ENCODE measurements at regions of chr12 and their contacts with region 1.

Region 1: GRCh38 chr12:56189176-56189917 is at the start of gene SMARCC2:
- DNase-seq: peak; percentile 91 to 92
- ATAC-seq: peak; percentile 83 to 91
- H3K4me3 ChIP-seq: peak within 1 kb of the TSS; percentile 81
- H3K27ac ChIP-seq: peak within 1 kb of the TSS; percentile 93 to 99
- H3K4me1 ChIP-seq: peaks cover 13% of the 10 kb centered on the region
- CTCF ChIP-seq: peak; percentile 99
- EP300 ChIP-seq: no peak
- POLR2A ChIP-seq: peak; percentile 63
- RAD21 ChIP-seq: peak; percentile 39 to 41; a peak in 3 of 5 replicates
- polyA plus RNA-seq, gene SMARCC2: 83.9 and 109 TPM in 2 replicates

Region 2: GRCh38 chr12:55619354-55620138 is 569.8 kb before region 1 on chr12:
- CTCF ChIA-PET with region 1: no interaction called
- POLR2A ChIA-PET with region 1: no interaction called
- DNase-seq: peak; percentile 91 to 94
- ATAC-seq: peak; percentile 89 to 98
- H3K4me3 ChIP-seq: no peak overlapping the region
- H3K27ac ChIP-seq: peak overlapping the region in 1 of 2 experiments; percentile 38; a peak in 2 of 6 replicates
- H3K4me1 ChIP-seq: peaks cover 5% of the 10 kb centered on the region
- CTCF ChIP-seq: peak; percentile 98
- EP300 ChIP-seq: no peak
- POLR2A ChIP-seq: no peak
- RAD21 ChIP-seq: peak; percentile 91 to 92

Region 3: GRCh38 chr12:56127888-56128669 is 61.3 kb before region 1 on chr12 and contains the start of gene ESYT1:
- CTCF ChIA-PET with region 1: interaction called, 204 read pairs
- POLR2A ChIA-PET with region 1: interaction called, 21 read pairs
- DNase-seq: peak; percentile 99 to 100
- ATAC-seq: peak; percentile 83 to 95
- H3K4me3 ChIP-seq: peak within 1 kb of the TSS; percentile 76
- H3K27ac ChIP-seq: peak within 1 kb of the TSS; percentile 87 to 89
- H3K4me1 ChIP-seq: peaks cover 25% of the 10 kb centered on the region
- CTCF ChIP-seq: no peak
- EP300 ChIP-seq: no peak
- POLR2A ChIP-seq: peak; percentile 69
- RAD21 ChIP-seq: no peak
- polyA plus RNA-seq, gene ESYT1: 72.4 and 91.6 TPM in 2 replicates

Region 4: DNA sequence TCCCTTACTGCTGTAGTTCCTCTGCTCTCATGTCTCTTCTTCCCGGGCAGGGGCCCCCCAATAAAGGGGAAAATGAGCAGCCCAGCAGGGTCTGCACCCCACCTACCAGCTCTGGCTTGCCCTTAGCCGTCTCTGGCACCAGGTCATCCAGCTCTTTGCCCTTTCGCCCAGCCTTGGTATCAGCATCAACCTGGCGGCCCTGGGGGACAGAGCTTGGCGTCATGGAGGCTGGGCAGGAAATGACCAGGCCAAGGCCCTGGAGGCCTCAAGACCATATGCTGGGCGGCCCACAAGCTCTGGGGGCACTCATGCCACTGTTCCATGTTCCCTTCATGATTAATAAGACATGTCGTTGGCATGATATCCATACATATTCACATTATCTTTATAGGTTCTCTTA is 16.5 kb before region 1 on chr12:
- CTCF ChIA-PET with region 1: interaction called, 42 read pairs
- POLR2A ChIA-PET with region 1: interaction called, 3 read pairs
- DNase-seq: no peak
- ATAC-seq: no peak
- H3K4me3 ChIP-seq: no peak overlapping the region
- H3K27ac ChIP-seq: no peak overlapping the region
- H3K4me1 ChIP-seq: no peaks in the 10 kb centered on the region
- CTCF ChIP-seq: no peak
- EP300 ChIP-seq: no peak
- POLR2A ChIP-seq: no peak
- RAD21 ChIP-seq: no peak

Region 5: GRCh38 chr12:56224102-56224701 is 34.9 kb after region 1 on chr12 and contains the start of gene NABP2:
- CTCF ChIA-PET with region 1: interaction called, 56 read pairs
- POLR2A ChIA-PET with region 1: interaction called, 19 read pairs
- DNase-seq: peak; percentile 99
- ATAC-seq: peak; percentile 84 to 89
- H3K4me3 ChIP-seq: peak within 1 kb of the TSS; percentile 66
- H3K27ac ChIP-seq: peak within 1 kb of the TSS; percentile 80 to 94
- H3K4me1 ChIP-seq: peaks cover 26% of the 10 kb centered on the region
- CTCF ChIP-seq: peak; percentile 95
- EP300 ChIP-seq: no peak
- POLR2A ChIP-seq: peak; percentile 61
- RAD21 ChIP-seq: peak; percentile 57 to 73
- polyA plus RNA-seq, gene NABP2: 86.1 and 86.7 TPM in 2 replicates

Region 6: GRCh38 chr12:56258057-56258819 is 68.9 kb after region 1 on chr12 and contains the start of gene ANKRD52:
- CTCF ChIA-PET with region 1: interaction called, 37 read pairs
- POLR2A ChIA-PET with region 1: interaction called, 3 read pairs
- DNase-seq: peak; percentile 80 to 88
- ATAC-seq: peak; percentile 86 to 89
- H3K4me3 ChIP-seq: peak within 1 kb of the TSS; percentile 94
- H3K27ac ChIP-seq: peak within 1 kb of the TSS; percentile 92 to 97
- H3K4me1 ChIP-seq: peaks cover 47% of the 10 kb centered on the region
- CTCF ChIP-seq: peak; percentile 87
- EP300 ChIP-seq: no peak
- POLR2A ChIP-seq: peak; percentile 65
- RAD21 ChIP-seq: 0 out of 5 replicates have a peak, but pooled peaks of 1 of the 2 experiments have one; percentile 39
- polyA plus RNA-seq, gene ANKRD52: 26.1 and 35.1 TPM in 2 replicates

Measured in A549 (cell line).